HEK293 (cell line): ENCODE measurements at regions of chr10 and their contacts with region 1.

Region 1: DNA sequence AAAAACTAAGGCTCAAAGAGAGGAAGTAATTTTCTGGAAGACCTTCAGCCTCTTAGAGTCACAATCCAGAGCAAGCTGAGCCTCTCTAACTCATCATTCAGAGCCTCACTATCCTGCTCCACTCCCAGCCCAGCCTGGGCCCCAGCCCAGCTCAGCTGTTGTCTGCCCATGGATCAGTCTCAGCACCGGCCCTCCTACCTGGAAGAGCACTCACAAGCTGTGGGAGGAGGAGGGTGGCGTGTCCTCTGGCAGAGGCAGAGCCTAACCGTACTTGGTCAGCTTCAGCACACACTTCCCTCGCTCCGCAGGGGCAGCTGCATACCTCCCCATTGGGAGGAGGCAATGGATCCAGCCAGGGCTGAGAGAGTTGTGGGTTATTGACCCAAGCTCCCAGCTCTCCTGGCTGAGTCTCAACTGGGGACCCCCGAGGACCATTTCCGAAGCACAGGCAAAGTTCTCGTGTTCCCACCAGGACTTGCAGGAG is 66.7 kb upstream of the GPR26 start:
- H3K4me3 ChIP-seq: no peak overlapping the region
- H3K27ac ChIP-seq: no peak overlapping the region
- H3K4me1 ChIP-seq: no peaks in the 10 kb centered on the region
- CTCF ChIP-seq: no peak

Region 2: GRCh38 chr10:123573236-123574108 is 25.9 kb before region 1 on chr10:
- CTCF ChIA-PET with region 1: interaction called, 15 read pairs
- POLR2A ChIA-PET with region 1: no interaction called
- H3K4me3 ChIP-seq: no peak overlapping the region
- H3K27ac ChIP-seq: no peak overlapping the region
- H3K4me1 ChIP-seq: 0 out of 2 replicates have a peak, but pooled peaks cover 2% of the 10 kb centered on the region
- CTCF ChIP-seq: peak; percentile 71